Naive thymus-derived CD4-positive, alpha-beta T cell (primary cell): ENCODE measurements at regions of chr1 and their contacts with region 1.

Region 1: GRCh38 chr1:211476200-211476849 is 15.6 kb downstream of the RD3 start:
- DNase-seq: peak; percentile 43 to 81 (median 73)
- ATAC-seq: peak; percentile 89
- H3K4me3 ChIP-seq: no peak overlapping the region
- H3K4me3 Mint-ChIP-seq: no peak overlapping the region
- H3K27ac ChIP-seq: no peak overlapping the region
- H3K27ac Mint-ChIP-seq: no peak overlapping the region
- H3K4me1 ChIP-seq: no peaks in the 10 kb centered on the region
- H3K4me1 Mint-ChIP-seq: peaks cover 0 to 4% (median 0%) of the 10 kb centered on the region in 7 donors
- H3K27me3 ChIP-seq: no peaks in the 10 kb centered on the region
- H3K27me3 Mint-ChIP-seq: peaks cover 6 to 42% (median 24%) of the 10 kb centered on the region in 5 donors

Region 2: GRCh38 chr1:211382714-211383480 is 93.4 kb before region 1 on chr1:
- CTCF ChIA-PET with region 1: interaction called, 3 read pairs
- POLR2A ChIA-PET with region 1: no interaction called
- intact Hi-C with region 1: loop called in 1 of 2 experiments (anchors 1 kb)
- DNase-seq: peak; percentile 53 to 85 (median 64)
- ATAC-seq: peak; percentile 94
- H3K4me3 ChIP-seq: peak overlapping the region; percentile 77
- H3K4me3 Mint-ChIP-seq: peak overlapping the region; percentile 87 to 97 (median 92)
- H3K27ac ChIP-seq: peak overlapping the region; percentile 80
- H3K27ac Mint-ChIP-seq: peak overlapping the region; percentile 92 to 98 (median 95)
- H3K4me1 ChIP-seq: peaks cover 5% of the 10 kb centered on the region in 2 donors
- H3K4me1 Mint-ChIP-seq: peaks cover 0 to 39% (median 31%) of the 10 kb centered on the region in 7 donors
- H3K27me3 ChIP-seq: no peaks in the 10 kb centered on the region
- H3K27me3 Mint-ChIP-seq: peaks cover 0 to 5% (median 0%) of the 10 kb centered on the region in 5 donors

Region 3: GRCh38 chr1:211415700-211416099 is 60.6 kb before region 1 on chr1:
- CTCF ChIA-PET with region 1: no interaction called
- POLR2A ChIA-PET with region 1: no interaction called
- intact Hi-C with region 1: loop called in 1 of 2 experiments (anchors 2 kb)
- DNase-seq: no peak
- ATAC-seq: no peak
- H3K4me3 ChIP-seq: no peak overlapping the region
- H3K4me3 Mint-ChIP-seq: peak overlapping the region; percentile 23 to 85 (median 70)
- H3K27ac ChIP-seq: no peak overlapping the region
- H3K27ac Mint-ChIP-seq: peak overlapping the region in 5 of 9 donors; percentile 7 to 75 (median 49)
- H3K4me1 ChIP-seq: peaks cover 0 to 6% of the 10 kb centered on the region in 2 donors
- H3K4me1 Mint-ChIP-seq: peaks cover 1 to 20% (median 15%) of the 10 kb centered on the region in 7 donors
- H3K27me3 ChIP-seq: no peaks in the 10 kb centered on the region
- H3K27me3 Mint-ChIP-seq: peaks cover 0 to 9% (median 0%) of the 10 kb centered on the region in 5 donors

Region 4: GRCh38 chr1:211654838-211655787 is 178.8 kb after region 1 on chr1:
- CTCF ChIA-PET with region 1: interaction called, 3 read pairs
- POLR2A ChIA-PET with region 1: no interaction called
- intact Hi-C with region 1: loop called (anchors 1 to 2 kb)
- DNase-seq: peak; percentile 60 to 82 (median 71)
- ATAC-seq: peak; percentile 95
- H3K4me3 ChIP-seq: no peak overlapping the region
- H3K4me3 Mint-ChIP-seq: no peak overlapping the region
- H3K27ac ChIP-seq: no peak overlapping the region
- H3K27ac Mint-ChIP-seq: no peak overlapping the region
- H3K4me1 ChIP-seq: no peaks in the 10 kb centered on the region
- H3K4me1 Mint-ChIP-seq: peaks cover 0 to 5% (median 0%) of the 10 kb centered on the region in 7 donors
- H3K27me3 ChIP-seq: no peaks in the 10 kb centered on the region
- H3K27me3 Mint-ChIP-seq: peaks cover 0 to 13% (median 0%) of the 10 kb centered on the region in 5 donors

Region 5: GRCh38 chr1:211800925-211801607 is 324.7 kb after region 1 on chr1:
- CTCF ChIA-PET with region 1: no interaction called
- POLR2A ChIA-PET with region 1: no interaction called
- intact Hi-C with region 1: no loop called
- DNase-seq: no peak
- ATAC-seq: no peak
- H3K4me3 ChIP-seq: no peak overlapping the region
- H3K4me3 Mint-ChIP-seq: no peak overlapping the region
- H3K27ac ChIP-seq: no peak overlapping the region
- H3K27ac Mint-ChIP-seq: no peak overlapping the region
- H3K4me1 ChIP-seq: no peaks in the 10 kb centered on the region
- H3K4me1 Mint-ChIP-seq: peaks cover 0 to 13% (median 0%) of the 10 kb centered on the region in 7 donors
- H3K27me3 ChIP-seq: no peaks in the 10 kb centered on the region
- H3K27me3 Mint-ChIP-seq: no peaks in the 10 kb centered on the region